WTC11 (cell line): ENCODE measurements at regions of chr3 and their contacts with region 1.

Region 1: GRCh38 chr3:61251174-61251972 is at the start of gene FHIT:
- DNase-seq: peak; percentile 97
- ATAC-seq: peak; percentile 93
- H3K4me3 Mint-ChIP-seq: peak within 1 kb of the TSS; percentile 89
- H3K27ac Mint-ChIP-seq: peak within 1 kb of the TSS; percentile 97
- H3K4me1 Mint-ChIP-seq: peaks cover 25% of the 10 kb centered on the region
- H3K27me3 Mint-ChIP-seq: no peaks in the 10 kb centered on the region
- CTCF ChIP-seq: no peak
- total RNA-seq, gene FHIT: 2.6 to 8.0 TPM (median 7.1 TPM) in 3 replicates

Region 2: DNA sequence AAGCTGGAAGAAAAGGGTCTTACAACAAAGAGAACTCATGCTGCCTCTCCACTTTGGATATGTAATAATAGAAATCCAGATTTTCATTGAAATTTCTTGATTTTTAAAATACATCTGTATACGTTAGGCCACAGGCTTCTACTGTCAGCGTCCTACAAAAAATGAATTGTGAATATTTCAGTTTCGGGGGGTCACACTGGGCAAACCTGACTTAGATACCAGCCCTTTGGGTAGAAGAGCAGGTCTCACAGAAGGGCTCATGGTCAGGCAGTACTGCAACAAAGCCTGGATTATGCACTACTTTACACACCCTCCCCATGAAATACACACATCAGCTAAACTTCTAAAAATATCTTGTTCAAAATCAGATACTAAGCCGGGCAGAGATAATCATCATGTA is 294.6 kb before region 1 on chr3:
- CTCF ChIA-PET with region 1: no interaction called
- POLR2A ChIA-PET with region 1: interaction called, 10 read pairs
- DNase-seq: no peak
- ATAC-seq: no peak
- H3K4me3 Mint-ChIP-seq: no peak overlapping the region
- H3K27ac Mint-ChIP-seq: no peak overlapping the region
- H3K4me1 Mint-ChIP-seq: peaks cover 8% of the 10 kb centered on the region
- H3K27me3 Mint-ChIP-seq: no peaks in the 10 kb centered on the region
- CTCF ChIP-seq: no peak

Region 3: DNA sequence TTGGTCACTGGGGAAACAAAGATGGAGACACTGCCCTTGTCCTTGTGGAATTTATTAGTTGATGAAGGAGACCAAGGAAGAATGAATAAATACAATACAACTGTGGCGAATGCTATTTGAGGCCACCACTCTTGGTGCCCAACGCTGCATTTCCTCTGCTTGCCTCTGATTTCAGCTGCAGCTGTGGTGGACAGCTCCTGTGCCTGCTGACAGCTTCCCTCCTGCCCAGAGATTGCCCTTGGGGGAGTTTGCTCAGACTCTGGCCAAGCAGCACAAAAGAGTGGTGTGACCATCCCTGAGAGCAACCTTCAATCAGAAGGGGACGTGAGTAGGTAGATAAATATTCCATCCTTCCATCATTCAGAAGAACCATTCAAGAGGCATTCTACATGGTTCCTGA is 64.5 kb after region 1 on chr3:
- CTCF ChIA-PET with region 1: no interaction called
- POLR2A ChIA-PET with region 1: no interaction called
- DNase-seq: peak; percentile 61
- ATAC-seq: peak; percentile 88
- H3K4me3 Mint-ChIP-seq: no peak overlapping the region
- H3K27ac Mint-ChIP-seq: no peak overlapping the region
- H3K4me1 Mint-ChIP-seq: no peaks in the 10 kb centered on the region; the same call in 1 of the 2 replicates
- H3K27me3 Mint-ChIP-seq: no peaks in the 10 kb centered on the region
- CTCF ChIP-seq: no peak